Panc1 (cell line): ENCODE measurements at regions of chr1 and their contacts with region 1.

Region 1: DNA sequence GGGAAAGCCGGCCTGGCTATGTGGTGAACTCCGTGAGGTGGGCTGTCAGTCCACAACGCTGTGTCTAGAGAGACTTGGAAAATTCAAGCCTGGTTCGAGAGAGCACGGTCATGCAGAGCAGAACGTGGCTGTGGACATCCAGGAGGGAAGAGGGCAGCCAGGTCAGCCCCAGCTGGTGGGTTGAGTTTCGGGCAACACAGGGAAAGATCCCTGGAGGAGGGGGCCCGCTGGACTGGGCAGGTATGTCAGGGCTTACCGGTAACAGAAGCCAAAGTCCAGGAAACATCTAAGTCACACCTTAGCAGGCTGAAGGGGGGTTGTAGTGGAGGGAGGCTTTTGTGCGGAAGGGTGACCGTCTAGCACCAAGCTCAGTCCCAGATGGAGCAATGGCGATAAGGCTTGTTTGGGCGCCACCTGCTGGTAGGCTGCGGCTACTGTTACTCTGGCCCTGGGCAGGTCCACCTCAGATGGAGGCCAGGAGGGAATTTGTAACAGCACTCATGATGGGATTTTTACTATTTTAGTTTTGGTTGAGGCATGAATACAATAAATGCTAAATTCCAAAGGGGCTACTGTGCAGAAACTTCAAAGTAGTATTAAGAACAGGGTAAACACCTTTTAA is 143.3 kb upstream of the ZNF644 start:
- DNase-seq: peak; percentile 58
- ATAC-seq: peak; percentile 97
- H3K4me3 ChIP-seq: no peak overlapping the region
- H3K27ac ChIP-seq: no peak overlapping the region
- H3K4me1 ChIP-seq: no peaks in the 10 kb centered on the region
- H3K27me3 ChIP-seq: no peaks in the 10 kb centered on the region
- CTCF ChIP-seq: peak; percentile 95

Region 2: GRCh38 chr1:90114521-90115141 is 1050.5 kb before region 1 on chr1:
- CTCF ChIA-PET with region 1: no interaction called
- POLR2A ChIA-PET with region 1: no interaction called
- in situ Hi-C with region 1: no loop called
- intact Hi-C with region 1: loop called (anchors 1 kb)
- DNase-seq: peak; percentile 51
- ATAC-seq: peak; percentile 78
- H3K4me3 ChIP-seq: no peak overlapping the region
- H3K27ac ChIP-seq: no peak overlapping the region
- H3K4me1 ChIP-seq: no peaks in the 10 kb centered on the region
- H3K27me3 ChIP-seq: peaks cover 28% of the 10 kb centered on the region
- CTCF ChIP-seq: peak; percentile 77; the same call in 1 of the 2 replicates

Region 3: DNA sequence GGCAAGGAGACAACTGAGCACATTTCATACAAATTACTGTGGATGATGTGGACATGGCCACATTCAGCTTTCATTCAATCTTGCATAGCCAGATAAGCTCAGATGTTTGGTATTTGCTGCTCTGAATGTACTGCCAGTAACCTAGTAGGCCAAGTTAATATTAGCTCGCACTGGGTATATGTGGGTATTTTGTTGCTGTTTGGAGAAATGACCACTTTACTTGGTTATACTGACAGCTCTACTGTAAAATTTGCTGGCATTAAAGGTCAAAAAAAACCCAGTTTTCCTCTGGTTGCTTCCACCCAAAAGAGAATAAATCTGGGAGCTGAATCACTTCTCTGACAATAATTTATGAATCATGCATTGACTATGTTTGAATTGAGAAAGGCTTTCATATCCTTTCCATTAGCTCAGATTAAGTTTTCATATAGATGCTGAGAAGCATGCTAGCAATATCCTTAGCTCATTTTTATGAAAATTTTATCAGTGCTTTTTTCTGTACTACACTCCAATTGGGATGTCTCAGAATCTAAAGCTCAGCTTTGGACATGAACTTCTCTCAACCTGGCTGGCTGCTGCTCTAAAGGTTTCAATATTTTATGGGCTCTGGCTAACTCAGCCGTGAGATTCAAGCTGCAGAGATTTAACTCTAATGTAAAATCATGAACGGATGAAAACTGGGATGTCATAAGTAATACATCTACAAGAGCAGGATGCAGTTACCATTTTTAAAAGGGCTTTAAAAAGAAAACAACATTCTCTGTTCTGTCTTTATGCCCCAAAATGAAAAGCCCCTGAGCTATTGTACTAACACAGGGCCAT is 778.0 kb before region 1 on chr1:
- CTCF ChIA-PET with region 1: no interaction called
- POLR2A ChIA-PET with region 1: no interaction called
- in situ Hi-C with region 1: no loop called
- intact Hi-C with region 1: no loop called
- DNase-seq: peak; percentile 30
- ATAC-seq: no peak
- H3K4me3 ChIP-seq: no peak overlapping the region
- H3K27ac ChIP-seq: no peak overlapping the region
- H3K4me1 ChIP-seq: no peaks in the 10 kb centered on the region
- H3K27me3 ChIP-seq: no peaks in the 10 kb centered on the region
- CTCF ChIP-seq: no peak

Region 4: DNA sequence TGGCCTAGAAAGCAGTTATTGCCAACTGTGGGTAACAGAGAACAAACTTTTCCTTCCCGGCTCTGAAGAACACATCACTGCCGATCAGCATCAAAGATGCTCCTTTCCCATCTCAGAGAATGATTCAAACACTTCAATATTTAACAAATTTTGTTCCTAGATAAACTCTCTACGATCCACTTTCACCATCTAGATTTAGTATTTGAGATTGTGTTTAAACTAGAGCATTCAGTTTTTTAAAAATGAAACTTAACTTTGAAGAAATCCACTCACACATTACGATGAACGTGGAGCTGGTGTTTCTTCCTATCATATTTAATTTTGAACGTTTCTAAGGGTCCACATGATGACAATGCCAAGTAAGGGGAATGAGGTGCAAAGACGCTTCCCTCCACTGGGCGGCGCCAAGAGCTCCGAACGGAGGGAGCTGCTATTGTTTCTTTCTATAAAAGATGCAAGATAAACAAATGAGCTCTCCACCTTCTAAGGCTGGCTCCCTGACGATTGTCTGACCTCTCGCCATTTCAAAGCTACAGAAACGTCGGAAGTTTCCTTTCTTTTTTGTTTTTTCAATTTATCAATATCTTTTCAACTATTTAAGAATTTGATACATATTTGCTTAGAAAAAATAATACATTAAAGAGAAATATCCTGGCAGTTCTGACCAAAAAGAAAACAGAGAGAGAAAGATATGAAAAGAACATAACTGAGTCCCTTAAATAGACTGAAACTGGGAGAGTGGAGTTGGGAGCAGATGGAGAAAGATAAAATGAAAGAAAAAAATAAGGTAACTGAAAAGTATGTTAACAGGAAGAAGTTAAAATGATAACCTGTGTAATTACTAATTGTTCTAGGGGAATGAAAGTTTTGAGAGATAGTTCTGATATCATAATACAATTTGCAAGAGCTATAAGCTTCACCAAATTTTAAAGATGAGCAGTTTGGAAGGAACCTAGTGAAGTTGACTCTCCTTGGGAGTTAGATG is 443.6 kb before region 1 on chr1:
- CTCF ChIA-PET with region 1: interaction called, 9 read pairs
- POLR2A ChIA-PET with region 1: no interaction called
- in situ Hi-C with region 1: no loop called
- intact Hi-C with region 1: loop called (anchors 2 kb)
- DNase-seq: peak; percentile 50
- ATAC-seq: peak; percentile 69
- H3K4me3 ChIP-seq: no peak overlapping the region
- H3K27ac ChIP-seq: no peak overlapping the region
- H3K4me1 ChIP-seq: no peaks in the 10 kb centered on the region
- H3K27me3 ChIP-seq: no peaks in the 10 kb centered on the region; the same call in 1 of the 2 replicates
- CTCF ChIP-seq: peak; percentile 99

Region 5: GRCh38 chr1:90850898-90851710 is 314.0 kb before region 1 on chr1:
- CTCF ChIA-PET with region 1: no interaction called
- POLR2A ChIA-PET with region 1: no interaction called
- in situ Hi-C with region 1: no loop called
- intact Hi-C with region 1: loop called (anchors 5 kb)
- DNase-seq: no peak
- ATAC-seq: peak; percentile 99
- H3K4me3 ChIP-seq: peak overlapping the region; percentile 75 to 85
- H3K27ac ChIP-seq: peak overlapping the region; percentile 71
- H3K4me1 ChIP-seq: 0 out of 2 replicates have a peak, but pooled peaks cover 3% of the 10 kb centered on the region
- H3K27me3 ChIP-seq: no peaks in the 10 kb centered on the region
- CTCF ChIP-seq: peak; percentile 96

Region 6: DNA sequence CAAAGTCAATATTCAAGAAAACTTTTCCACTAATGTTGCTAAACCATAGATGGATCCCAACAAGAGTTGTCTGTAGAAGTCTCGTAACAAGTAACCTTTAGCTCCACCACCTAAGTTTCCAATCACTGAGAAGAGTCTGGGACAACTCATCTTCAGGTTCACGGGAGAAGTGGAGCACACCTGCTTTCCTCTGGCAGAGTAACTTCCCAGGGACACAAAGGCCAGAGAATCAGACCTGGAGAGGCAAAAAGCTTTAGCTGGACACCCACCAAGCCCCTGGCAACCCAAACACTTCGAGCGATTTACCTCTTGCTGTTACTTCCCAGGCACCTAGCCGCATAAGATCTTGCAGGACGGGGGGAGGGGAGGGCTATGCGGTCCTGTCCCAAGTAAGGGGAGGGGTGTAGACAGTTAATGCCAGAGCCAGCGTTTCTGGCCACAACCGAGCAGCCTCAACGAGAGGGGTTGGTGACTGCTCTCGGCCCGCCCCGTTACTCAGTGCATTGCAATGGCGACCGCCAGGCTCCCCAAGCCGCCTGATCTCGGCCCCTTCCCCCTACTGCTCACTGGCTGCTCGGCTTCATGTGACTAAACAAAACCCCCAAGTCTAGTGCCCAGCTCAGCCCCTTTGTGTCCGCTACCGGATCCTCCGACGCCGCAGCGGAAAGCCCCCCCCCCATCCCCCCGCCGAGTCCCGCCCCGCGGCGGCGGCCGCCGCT is 144.0 kb before region 1 on chr1:
- CTCF ChIA-PET with region 1: interaction called, 12 read pairs
- POLR2A ChIA-PET with region 1: no interaction called
- in situ Hi-C with region 1: no loop called
- intact Hi-C with region 1: loop called (anchors 10 kb)
- DNase-seq: no peak
- ATAC-seq: peak; percentile 80
- H3K4me3 ChIP-seq: peak overlapping the region; percentile 63 to 93
- H3K27ac ChIP-seq: peak overlapping the region; percentile 90
- H3K4me1 ChIP-seq: peaks cover 47% of the 10 kb centered on the region
- H3K27me3 ChIP-seq: no peaks in the 10 kb centered on the region
- CTCF ChIP-seq: no peak

Region 7: DNA sequence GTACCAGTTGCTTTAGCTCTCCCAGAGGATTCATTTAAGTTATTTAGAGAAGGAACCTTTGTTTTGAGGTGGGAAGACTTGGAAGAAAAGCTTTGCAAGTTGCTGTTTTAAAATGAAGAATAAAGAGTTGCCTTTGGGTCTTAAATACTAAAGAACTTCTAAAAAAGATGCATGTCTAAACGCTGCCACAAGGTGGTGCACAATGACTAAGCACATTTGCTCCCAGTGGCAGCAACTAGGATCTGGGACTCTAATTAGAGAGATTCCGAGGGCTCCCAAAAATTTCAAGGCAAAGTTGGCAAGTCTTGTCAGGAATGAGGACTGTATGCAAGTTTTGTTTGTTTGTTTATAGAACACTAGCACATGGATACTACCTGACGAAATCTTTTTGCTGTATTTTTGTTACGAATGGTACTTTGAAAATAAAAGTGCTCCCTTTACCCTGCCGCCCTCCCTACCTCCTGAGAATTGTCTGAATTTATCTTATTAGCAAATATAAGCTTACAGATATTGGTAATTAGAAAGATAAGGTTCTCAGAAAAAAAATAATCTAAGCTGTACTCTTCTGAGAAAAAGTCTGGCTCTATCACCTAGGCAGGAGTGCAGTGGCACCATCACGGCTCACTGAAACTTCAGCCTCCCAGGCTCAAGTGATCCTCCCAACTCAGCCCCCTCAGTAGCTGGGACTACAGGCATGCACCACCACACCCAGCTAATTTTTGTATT is 117.7 kb after region 1 on chr1:
- CTCF ChIA-PET with region 1: interaction called, 24 read pairs
- POLR2A ChIA-PET with region 1: no interaction called
- in situ Hi-C with region 1: no loop called
- intact Hi-C with region 1: loop called (anchors 1 kb)
- DNase-seq: peak; percentile 56
- ATAC-seq: peak; percentile 90
- H3K4me3 ChIP-seq: peak overlapping the region in 1 of 2 experiments; percentile 19; a peak in 1 of 4 replicates
- H3K27ac ChIP-seq: no peak overlapping the region
- H3K4me1 ChIP-seq: no peaks in the 10 kb centered on the region
- H3K27me3 ChIP-seq: peaks cover 4% of the 10 kb centered on the region; the same call in 1 of the 2 replicates
- CTCF ChIP-seq: peak; percentile 91

Region 8: DNA sequence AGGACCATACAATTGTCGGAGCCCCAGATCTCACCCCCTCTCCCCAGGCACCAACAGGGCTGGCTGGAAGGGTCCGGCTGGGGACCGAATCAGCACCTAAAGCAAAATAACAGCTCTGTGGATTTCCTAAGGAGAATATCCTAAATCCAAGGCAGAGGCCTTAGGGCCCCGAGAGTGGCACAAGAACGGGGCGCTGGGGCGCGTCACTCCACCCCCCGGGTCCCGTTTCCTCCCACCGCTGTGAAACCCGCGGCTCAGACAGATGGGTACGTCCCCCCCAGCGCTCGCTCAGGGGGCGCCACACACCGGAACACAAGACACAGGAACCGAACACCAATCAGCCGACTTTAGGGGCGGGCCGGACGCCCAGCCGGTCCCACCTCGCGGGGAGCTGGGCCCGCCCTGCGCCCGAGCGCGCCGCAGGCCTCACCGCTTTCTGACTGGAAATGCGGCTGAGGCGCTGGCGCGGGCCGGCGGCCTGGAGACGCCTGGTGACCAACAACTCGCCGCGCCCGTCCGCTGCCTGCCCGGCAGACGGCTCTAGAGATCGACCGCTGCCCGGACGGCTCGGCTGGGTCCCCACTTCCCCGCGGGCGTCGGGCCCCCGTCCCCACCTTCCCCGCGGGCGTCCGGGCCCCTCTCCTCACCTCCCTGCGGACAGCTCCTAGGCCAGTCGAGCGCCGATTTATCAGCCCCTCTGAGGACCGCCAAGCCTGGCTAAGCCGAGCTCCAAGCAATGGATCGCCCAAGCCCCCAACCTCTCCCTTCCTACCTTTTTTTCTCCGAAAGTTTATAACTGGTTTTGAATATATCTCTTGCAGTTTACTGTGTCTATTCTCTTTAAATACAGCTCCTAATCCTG is 239.2 kb after region 1 on chr1 and contains the start of gene HFM1:
- CTCF ChIA-PET with region 1: interaction called, 7 read pairs
- POLR2A ChIA-PET with region 1: no interaction called
- in situ Hi-C with region 1: no loop called
- intact Hi-C with region 1: loop called (anchors 5 kb)
- DNase-seq: no peak
- ATAC-seq: peak; percentile 100
- H3K4me3 ChIP-seq: peak within 1 kb of the TSS; percentile 66 to 73
- H3K27ac ChIP-seq: peak within 1 kb of the TSS; percentile 49; the same call in 1 of the 2 replicates
- H3K4me1 ChIP-seq: peaks cover 3% of the 10 kb centered on the region; the same call in 1 of the 2 replicates
- H3K27me3 ChIP-seq: peaks cover 17% of the 10 kb centered on the region
- CTCF ChIP-seq: peak; percentile 46
- total RNA-seq, gene HFM1: 0.39 TPM